ENCODE measurements at regions of chr1 and their contacts with region 1.

Region 1: GRCh38 chr1:56189946-56190792 is 389.2 kb downstream of the PLPP3 start:
- DNase-seq: no peak
- ATAC-seq: peak; percentile 73
- H3K4me3 ChIP-seq: no peak overlapping the region
- H3K27ac ChIP-seq: no peak overlapping the region
- H3K4me1 ChIP-seq: no peaks in the 10 kb centered on the region
- H3K27me3 ChIP-seq: no peaks in the 10 kb centered on the region
- CTCF ChIP-seq: peak in 2 of 3 experiments; percentile 27 to 35; a peak in 3 of 6 replicates
- EP300 ChIP-seq: no peak
- POLR2A ChIP-seq: no peak
- RAD21 ChIP-seq: peak; percentile 31; the same call in 1 of the 2 replicates

Region 2: GRCh38 chr1:56169856-56170255 is 20.3 kb before region 1 on chr1:
- CTCF ChIA-PET with region 1: interaction called, 38 read pairs
- POLR2A ChIA-PET with region 1: interaction called, 3 read pairs
- RAD21 ChIA-PET with region 1: interaction called, 3 read pairs
- SMC1A ChIA-PET with region 1: interaction called, 55 read pairs
- in situ Hi-C with region 1: no loop called
- intact Hi-C with region 1: no loop called
- DNase-seq: no peak
- ATAC-seq: no peak
- H3K4me3 ChIP-seq: no peak overlapping the region
- H3K27ac ChIP-seq: no peak overlapping the region
- H3K4me1 ChIP-seq: no peaks in the 10 kb centered on the region
- H3K27me3 ChIP-seq: no peaks in the 10 kb centered on the region
- CTCF ChIP-seq: no peak
- EP300 ChIP-seq: no peak
- POLR2A ChIP-seq: no peak
- RAD21 ChIP-seq: no peak

Region 3: GRCh38 chr1:56175211-56175610 is 15.0 kb before region 1 on chr1:
- CTCF ChIA-PET with region 1: interaction called, 38 read pairs
- POLR2A ChIA-PET with region 1: interaction called, 3 read pairs
- RAD21 ChIA-PET with region 1: interaction called, 4 read pairs
- SMC1A ChIA-PET with region 1: interaction called, 55 read pairs
- in situ Hi-C with region 1: no loop called
- intact Hi-C with region 1: no loop called
- DNase-seq: no peak
- ATAC-seq: no peak
- H3K4me3 ChIP-seq: no peak overlapping the region
- H3K27ac ChIP-seq: no peak overlapping the region
- H3K4me1 ChIP-seq: no peaks in the 10 kb centered on the region
- H3K27me3 ChIP-seq: no peaks in the 10 kb centered on the region; a peak in 1 of 4 replicates
- CTCF ChIP-seq: no peak
- EP300 ChIP-seq: no peak
- POLR2A ChIP-seq: no peak
- RAD21 ChIP-seq: no peak

Region 4: GRCh38 chr1:56200442-56200841 is 10.3 kb after region 1 on chr1:
- CTCF ChIA-PET with region 1: interaction called, 12 read pairs
- POLR2A ChIA-PET with region 1: no interaction called
- RAD21 ChIA-PET with region 1: no interaction called
- SMC1A ChIA-PET with region 1: interaction called, 6 read pairs
- in situ Hi-C with region 1: no loop called
- intact Hi-C with region 1: no loop called
- DNase-seq: no peak
- ATAC-seq: no peak
- H3K4me3 ChIP-seq: no peak overlapping the region
- H3K27ac ChIP-seq: no peak overlapping the region
- H3K4me1 ChIP-seq: no peaks in the 10 kb centered on the region
- H3K27me3 ChIP-seq: no peaks in the 10 kb centered on the region
- CTCF ChIP-seq: no peak
- EP300 ChIP-seq: no peak
- POLR2A ChIP-seq: no peak
- RAD21 ChIP-seq: no peak